ENCODE measurements at regions of chr17 and their contacts with region 1.

Region 1: DNA sequence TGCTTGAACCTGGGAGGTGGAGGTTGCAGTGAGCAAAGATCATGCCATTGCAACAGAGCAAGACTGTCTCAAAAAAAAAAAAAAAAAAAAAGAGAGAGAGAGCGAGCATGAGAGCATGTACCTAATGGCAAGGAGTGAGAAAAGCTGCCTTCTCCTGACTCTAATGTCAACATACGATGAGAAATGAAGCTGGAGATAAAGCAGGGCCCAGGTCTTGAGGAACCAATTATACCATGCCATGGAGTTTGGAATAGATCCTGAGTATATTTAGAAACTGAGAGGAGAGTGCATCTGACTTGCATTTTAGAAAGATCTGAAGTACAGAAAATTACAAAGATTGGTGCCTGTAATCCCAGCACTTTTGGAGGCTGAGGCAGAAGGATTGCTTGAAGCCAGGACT is 3.8 kb upstream of the MAP2K6 start:
- DNase-seq: no peak
- ATAC-seq: no peak
- H3K4me3 ChIP-seq: no peak overlapping the region
- H3K27ac ChIP-seq: no peak overlapping the region
- H3K4me1 ChIP-seq: peaks cover 10% of the 10 kb centered on the region
- H3K27me3 ChIP-seq: no peaks in the 10 kb centered on the region
- CTCF ChIP-seq: no peak

Region 2: GRCh38 chr17:68539548-68540467 is 870.9 kb before region 1 on chr17:
- CTCF ChIA-PET with region 1: no interaction called
- POLR2A ChIA-PET with region 1: interaction called, 17 read pairs
- in situ Hi-C with region 1: no loop called
- intact Hi-C with region 1: no loop called
- DNase-seq: no peak
- ATAC-seq: no peak
- H3K4me3 ChIP-seq: no peak overlapping the region
- H3K27ac ChIP-seq: no peak overlapping the region
- H3K4me1 ChIP-seq: no peaks in the 10 kb centered on the region
- H3K27me3 ChIP-seq: no peaks in the 10 kb centered on the region
- CTCF ChIP-seq: no peak

Region 3: DNA sequence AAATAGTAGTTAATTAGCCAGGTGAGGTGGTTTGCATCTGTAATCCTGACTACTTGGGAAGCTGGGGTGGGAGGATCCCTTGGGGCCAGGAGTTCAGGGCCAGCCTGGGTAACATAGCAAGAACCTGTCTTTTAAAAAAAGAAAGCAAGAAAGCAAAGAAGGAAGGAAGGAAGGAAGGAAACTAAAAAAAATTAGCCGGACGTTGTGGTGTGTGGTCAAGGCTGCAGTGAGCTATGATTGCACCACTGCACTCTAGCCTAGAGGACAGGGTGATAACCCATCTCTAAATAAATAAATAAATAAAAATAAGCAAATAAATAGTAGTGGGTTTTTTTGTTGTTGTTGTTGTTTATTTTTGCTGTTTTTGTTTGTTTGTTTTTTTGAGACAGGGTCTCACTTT is 35.4 kb before region 1 on chr17:
- CTCF ChIA-PET with region 1: no interaction called
- POLR2A ChIA-PET with region 1: no interaction called
- in situ Hi-C with region 1: no loop called
- intact Hi-C with region 1: no loop called
- DNase-seq: no peak
- ATAC-seq: no peak
- H3K4me3 ChIP-seq: no peak overlapping the region
- H3K27ac ChIP-seq: no peak overlapping the region
- H3K4me1 ChIP-seq: no peaks in the 10 kb centered on the region
- H3K27me3 ChIP-seq: no peaks in the 10 kb centered on the region
- CTCF ChIP-seq: no peak

Region 4: GRCh38 chr17:69423450-69423849 is 12.8 kb after region 1 on chr17:
- CTCF ChIA-PET with region 1: no interaction called
- POLR2A ChIA-PET with region 1: no interaction called
- in situ Hi-C with region 1: no loop called
- intact Hi-C with region 1: no loop called
- DNase-seq: no peak
- ATAC-seq: no peak
- H3K4me3 ChIP-seq: no peak overlapping the region
- H3K27ac ChIP-seq: no peak overlapping the region
- H3K4me1 ChIP-seq: no peaks in the 10 kb centered on the region
- H3K27me3 ChIP-seq: no peaks in the 10 kb centered on the region
- CTCF ChIP-seq: no peak

Measured in Panc1 (cell line).